ENCODE measurements at regions of chrX and their contacts with region 1.

Region 1: DNA sequence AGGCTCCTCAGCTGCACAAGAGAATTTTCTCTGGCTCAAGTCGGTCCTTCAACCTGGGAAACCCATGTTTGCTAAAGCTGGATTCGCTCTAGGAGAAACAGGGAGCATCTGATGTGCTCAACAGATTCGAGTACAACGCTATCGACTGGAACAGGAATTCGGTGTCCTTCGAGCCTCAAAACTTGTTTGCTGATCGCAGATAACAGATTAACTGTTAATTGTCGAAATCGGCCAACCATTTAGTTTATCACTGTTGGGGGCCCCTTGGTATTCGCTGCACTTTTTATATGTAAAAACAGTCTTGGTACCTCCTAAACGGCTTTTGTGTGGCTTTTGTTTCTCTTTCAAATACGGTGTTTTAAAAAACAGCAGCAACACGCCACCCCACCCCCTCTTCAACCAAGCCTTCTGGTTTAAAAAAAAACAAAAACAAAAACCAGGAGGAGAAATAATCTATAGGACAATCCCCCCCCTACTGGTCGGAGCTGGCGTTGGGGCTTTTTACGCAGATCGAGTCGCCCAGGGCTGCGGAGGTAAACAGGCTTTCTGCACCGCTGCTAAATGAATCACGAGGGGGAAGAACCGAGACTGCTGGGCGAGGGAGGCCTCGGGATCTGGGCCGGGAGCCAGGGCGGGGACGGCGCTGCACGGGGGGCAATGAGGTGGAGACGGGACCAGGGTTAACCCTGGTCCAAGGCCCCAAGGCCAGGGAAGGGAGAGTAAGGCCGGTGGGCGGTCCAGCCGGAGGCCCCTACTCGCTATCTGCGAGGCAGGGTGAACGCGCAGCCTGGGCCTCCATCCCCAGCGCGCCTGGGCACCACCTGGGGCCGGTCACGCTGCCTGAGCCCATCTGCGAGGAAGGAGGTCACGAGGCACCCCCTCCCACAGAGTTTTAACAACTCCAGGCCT is 71.7 kb upstream of the BCOR start:
- DNase-seq: no peak
- ATAC-seq: peak; percentile 64
- H3K4me3 ChIP-seq: peak overlapping the region; percentile 49; the same call in 1 of the 2 replicates
- H3K27ac ChIP-seq: peak overlapping the region; percentile 58
- H3K4me1 ChIP-seq: peaks cover 13% of the 10 kb centered on the region; the same call in 1 of the 2 replicates
- H3K27me3 ChIP-seq: no peaks in the 10 kb centered on the region
- CTCF ChIP-seq: peak; percentile 46 to 63 (median 49); a peak in 5 of 6 replicates
- EP300 ChIP-seq: no peak; a peak in 1 of 4 replicates
- POLR2A ChIP-seq: no peak; the same call in 1 of the 2 replicates
- RAD21 ChIP-seq: peak; percentile 71

Region 2: GRCh38 chrX:39814391-39814790 is 355.1 kb before region 1 on chrX:
- CTCF ChIA-PET with region 1: no interaction called
- POLR2A ChIA-PET with region 1: no interaction called
- RAD21 ChIA-PET with region 1: interaction called, 3 read pairs
- SMC1A ChIA-PET with region 1: no interaction called
- in situ Hi-C with region 1: no loop called
- intact Hi-C with region 1: loop called (anchors 5 kb)
- DNase-seq: no peak
- ATAC-seq: peak; percentile 62
- H3K4me3 ChIP-seq: no peak overlapping the region
- H3K27ac ChIP-seq: no peak overlapping the region
- H3K4me1 ChIP-seq: peaks cover 18% of the 10 kb centered on the region
- H3K27me3 ChIP-seq: no peaks in the 10 kb centered on the region; a peak in 2 of 4 replicates
- CTCF ChIP-seq: peak; percentile 47 to 64 (median 58); a peak in 5 of 6 replicates
- EP300 ChIP-seq: no peak
- POLR2A ChIP-seq: no peak
- RAD21 ChIP-seq: peak; percentile 65

Region 3: DNA sequence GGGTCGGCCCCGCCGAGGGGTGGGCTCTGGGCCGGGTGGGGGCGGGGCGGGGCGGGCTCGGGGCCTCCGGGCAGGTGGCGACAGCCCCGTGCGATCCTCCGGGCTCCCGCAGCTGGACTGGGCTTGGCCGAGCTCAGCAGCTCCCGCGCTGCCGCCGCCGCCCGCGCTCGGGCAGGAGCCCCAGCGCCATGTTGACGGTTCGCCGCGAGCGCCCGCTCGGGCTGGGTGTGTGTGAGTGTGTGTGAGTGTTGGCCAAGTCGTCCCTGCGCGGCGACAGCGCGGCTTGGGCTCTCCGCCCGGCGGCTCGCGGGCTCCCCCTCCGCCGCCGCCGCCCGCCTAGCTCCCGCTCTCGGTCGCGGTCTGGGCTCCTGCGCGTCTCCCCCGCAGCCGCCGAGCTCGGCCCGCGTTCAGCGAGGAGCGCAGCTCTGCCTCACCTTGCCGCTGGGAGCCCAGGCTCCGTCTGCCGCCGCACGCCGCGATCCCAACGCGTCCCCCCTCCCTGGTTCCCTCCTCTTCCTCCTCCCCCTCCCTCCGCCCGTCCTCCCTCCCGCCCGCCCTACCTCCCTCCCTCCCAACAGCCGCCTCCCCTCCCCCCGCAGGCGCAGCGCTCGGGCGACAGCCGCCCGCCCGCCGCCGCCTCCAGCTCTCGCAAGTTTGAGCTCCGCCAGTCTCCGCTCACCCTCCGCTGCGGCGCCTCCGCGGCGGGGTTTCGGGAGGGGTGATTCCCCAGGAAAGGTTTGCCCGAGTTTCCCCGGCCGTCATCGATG is 71.8 kb before region 1 on chrX and contains the start of gene BCOR:
- CTCF ChIA-PET with region 1: no interaction called
- POLR2A ChIA-PET with region 1: no interaction called
- RAD21 ChIA-PET with region 1: no interaction called
- SMC1A ChIA-PET with region 1: no interaction called
- in situ Hi-C with region 1: no loop called
- intact Hi-C with region 1: loop called (anchors 2 kb)
- DNase-seq: no peak
- ATAC-seq: peak; percentile 18
- H3K4me3 ChIP-seq: peak within 1 kb of the TSS; percentile 72
- H3K27ac ChIP-seq: peak within 1 kb of the TSS; percentile 74
- H3K4me1 ChIP-seq: peaks cover 4% of the 10 kb centered on the region; the same call in 1 of the 2 replicates
- H3K27me3 ChIP-seq: no peaks in the 10 kb centered on the region
- CTCF ChIP-seq: no peak
- EP300 ChIP-seq: no peak
- POLR2A ChIP-seq: peak; percentile 90
- RAD21 ChIP-seq: no peak
- polyA plus RNA-seq, gene BCOR: 5.1 to 8.0 TPM

Region 4: DNA sequence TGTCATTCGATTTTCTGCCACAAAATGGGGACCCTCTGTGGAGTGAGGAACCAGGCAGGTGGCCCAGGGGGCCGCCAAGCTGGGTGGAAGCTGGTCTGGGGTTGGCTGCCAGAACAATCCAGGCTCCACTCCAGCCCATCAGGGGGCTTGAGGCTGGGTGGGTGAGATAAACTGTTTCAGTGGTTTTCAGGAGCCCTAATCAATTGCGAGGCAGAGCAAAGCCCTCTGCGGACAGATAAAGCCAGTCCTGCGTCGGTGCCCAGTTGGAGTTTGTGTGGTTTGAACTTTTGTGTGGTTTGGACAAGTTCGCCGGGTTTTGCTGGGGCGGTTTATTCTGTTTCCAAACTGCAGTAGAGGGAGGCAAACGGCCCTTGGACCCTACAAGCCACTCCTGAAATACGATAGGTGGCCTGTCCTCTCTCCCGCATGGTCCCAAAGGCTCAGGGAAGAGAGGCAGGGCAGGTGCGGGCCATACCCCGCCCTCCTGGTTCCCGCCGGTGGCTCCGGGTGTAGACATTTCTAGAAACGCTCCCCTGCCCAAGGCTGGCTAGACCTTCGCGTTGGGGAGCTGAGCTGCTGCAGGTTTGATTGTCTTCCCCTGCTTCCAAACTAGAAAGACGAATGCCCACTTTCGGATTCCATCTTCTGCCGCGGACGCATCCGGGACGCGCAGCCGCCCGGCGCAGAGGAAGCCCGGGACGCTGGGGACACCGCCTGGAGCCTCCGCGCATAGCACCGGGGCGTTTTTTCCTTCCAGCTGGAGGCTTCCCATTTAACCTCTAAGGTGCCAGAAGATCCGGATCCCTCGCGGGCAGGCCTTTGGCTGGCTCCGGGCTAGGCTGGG is 97.3 kb after region 1 on chrX:
- CTCF ChIA-PET with region 1: no interaction called
- POLR2A ChIA-PET with region 1: no interaction called
- RAD21 ChIA-PET with region 1: no interaction called
- SMC1A ChIA-PET with region 1: no interaction called
- in situ Hi-C with region 1: no loop called
- intact Hi-C with region 1: loop called (anchors 5 kb)
- DNase-seq: no peak
- ATAC-seq: peak; percentile 79
- H3K4me3 ChIP-seq: peak overlapping the region; percentile 41; the same call in 1 of the 2 replicates
- H3K27ac ChIP-seq: peak overlapping the region; percentile 52
- H3K4me1 ChIP-seq: peaks cover 14% of the 10 kb centered on the region
- H3K27me3 ChIP-seq: no peaks in the 10 kb centered on the region
- CTCF ChIP-seq: peak; percentile 51 to 55 (median 51)
- EP300 ChIP-seq: no peak
- POLR2A ChIP-seq: no peak
- RAD21 ChIP-seq: peak; percentile 69

Region 5: DNA sequence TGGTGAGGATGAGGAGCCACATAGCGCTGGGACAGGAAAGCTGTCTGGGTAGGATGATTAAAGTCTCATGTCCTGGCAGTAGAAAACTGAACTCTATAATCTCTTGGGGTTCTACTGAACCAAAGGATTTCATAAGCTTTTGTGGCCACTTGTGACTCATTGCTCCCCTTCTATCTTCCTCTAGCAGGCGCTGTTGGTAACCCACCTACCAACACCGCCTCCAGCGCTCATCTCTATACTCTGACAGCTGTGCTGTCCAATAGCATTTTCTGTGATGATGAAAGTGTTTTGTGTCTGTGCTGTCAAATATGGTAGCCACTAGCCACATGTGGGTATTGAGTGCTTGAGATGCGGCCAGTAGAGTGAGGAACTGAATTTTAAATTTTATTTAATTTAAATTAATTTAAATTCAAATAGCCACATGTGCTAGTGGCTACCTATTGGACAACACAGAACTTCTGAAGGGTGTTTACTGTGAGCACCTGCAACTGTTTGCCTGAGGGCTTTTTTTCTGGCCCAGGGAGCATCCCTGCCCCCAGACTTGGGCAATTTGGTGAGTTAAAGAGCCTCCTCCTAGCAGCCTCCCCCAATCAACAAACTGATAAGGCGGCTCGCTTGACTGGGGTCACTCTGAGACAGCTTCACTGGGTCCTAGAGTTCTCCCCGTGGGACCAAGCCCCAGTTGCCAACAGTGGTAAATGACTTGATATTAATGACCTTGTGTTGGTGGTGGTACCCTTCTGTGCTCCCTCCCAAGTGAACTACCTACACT is 242.1 kb after region 1 on chrX:
- CTCF ChIA-PET with region 1: no interaction called
- POLR2A ChIA-PET with region 1: no interaction called
- RAD21 ChIA-PET with region 1: no interaction called
- SMC1A ChIA-PET with region 1: no interaction called
- in situ Hi-C with region 1: no loop called
- intact Hi-C with region 1: no loop called
- DNase-seq: no peak
- ATAC-seq: peak; percentile 55
- H3K4me3 ChIP-seq: no peak overlapping the region
- H3K27ac ChIP-seq: no peak overlapping the region
- H3K4me1 ChIP-seq: no peaks in the 10 kb centered on the region
- H3K27me3 ChIP-seq: no peaks in the 10 kb centered on the region
- CTCF ChIP-seq: peak in 2 of 3 experiments; percentile 2 to 29; a peak in 1 of 6 replicates
- EP300 ChIP-seq: no peak
- POLR2A ChIP-seq: no peak
- RAD21 ChIP-seq: no peak

Measured in GM12878 (cell line).